ENCODE measurements at regions of chrX and their contacts with region 1.

Region 1: DNA sequence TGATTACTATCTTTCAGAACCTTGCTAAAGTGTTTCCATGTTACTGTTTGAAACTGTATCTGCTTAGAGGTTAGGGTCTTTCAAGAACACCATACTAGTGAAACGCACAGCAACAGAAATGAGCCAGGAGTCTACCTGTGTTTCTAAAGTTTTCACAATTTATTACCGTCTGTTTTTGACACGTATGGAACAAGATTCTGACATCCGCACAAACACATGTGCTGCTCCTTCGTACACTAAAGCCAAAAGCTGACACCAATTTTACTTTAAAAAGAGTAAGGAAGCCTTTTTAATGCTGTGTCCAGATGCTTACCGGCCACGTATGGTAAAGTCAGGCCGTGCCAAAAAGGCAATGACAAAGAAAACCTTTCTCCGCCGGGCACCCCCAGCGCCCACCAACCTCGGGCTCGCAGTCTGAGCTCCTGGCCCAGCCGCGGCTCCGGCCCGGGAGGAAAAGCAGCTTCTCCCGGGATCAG is 532 bp downstream of the RPS4X start:
- DNase-seq: no peak

Region 2: DNA sequence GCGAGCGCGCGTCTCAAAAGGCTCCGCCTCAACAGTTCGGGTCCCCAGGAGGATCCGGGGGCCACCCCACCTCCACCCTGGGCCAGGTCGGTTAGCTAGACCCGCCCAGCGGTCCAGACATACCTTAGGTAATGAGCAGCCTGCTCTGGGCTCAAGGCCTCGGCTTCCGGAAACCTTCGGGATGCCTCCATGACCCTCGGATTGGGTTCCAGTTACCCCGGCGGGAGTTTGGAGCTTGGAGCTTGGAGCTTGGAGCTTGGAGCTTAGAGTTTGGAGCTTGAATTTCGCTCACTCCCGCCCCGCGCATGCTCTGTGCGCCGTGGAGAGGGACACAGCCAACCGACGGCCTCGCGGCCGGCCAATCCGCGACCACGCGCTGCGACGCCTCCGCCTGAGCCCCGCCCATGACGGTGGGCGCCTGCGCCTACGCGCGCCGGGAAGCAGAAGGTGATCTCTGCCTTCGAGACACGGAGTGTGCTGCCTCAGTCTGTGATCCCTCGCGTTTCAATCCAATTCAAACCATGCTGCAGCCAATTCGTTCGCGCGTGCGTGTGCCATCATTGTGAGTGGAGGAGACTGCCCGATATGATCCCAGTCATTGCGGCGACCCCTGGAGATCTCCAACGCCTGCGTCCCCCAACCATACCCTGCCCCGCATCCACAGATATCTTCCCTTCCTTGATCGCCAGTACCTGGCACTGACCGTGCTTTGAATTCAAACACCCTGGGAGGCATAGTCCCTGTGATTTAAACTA is 37.6 kb before region 1 on chrX and contains the start of gene ERCC6L:
- intact Hi-C with region 1: loop called (anchors 5 kb)
- DNase-seq: peak; percentile 90
- total RNA-seq, gene ERCC6L: 0.08 TPM

Measured in cardiac septum (tissue), 1 donor.